Endothelial cell of umbilical vein (primary cell): ENCODE measurements at regions of chr7 and their contacts with region 1.

Region 1: DNA sequence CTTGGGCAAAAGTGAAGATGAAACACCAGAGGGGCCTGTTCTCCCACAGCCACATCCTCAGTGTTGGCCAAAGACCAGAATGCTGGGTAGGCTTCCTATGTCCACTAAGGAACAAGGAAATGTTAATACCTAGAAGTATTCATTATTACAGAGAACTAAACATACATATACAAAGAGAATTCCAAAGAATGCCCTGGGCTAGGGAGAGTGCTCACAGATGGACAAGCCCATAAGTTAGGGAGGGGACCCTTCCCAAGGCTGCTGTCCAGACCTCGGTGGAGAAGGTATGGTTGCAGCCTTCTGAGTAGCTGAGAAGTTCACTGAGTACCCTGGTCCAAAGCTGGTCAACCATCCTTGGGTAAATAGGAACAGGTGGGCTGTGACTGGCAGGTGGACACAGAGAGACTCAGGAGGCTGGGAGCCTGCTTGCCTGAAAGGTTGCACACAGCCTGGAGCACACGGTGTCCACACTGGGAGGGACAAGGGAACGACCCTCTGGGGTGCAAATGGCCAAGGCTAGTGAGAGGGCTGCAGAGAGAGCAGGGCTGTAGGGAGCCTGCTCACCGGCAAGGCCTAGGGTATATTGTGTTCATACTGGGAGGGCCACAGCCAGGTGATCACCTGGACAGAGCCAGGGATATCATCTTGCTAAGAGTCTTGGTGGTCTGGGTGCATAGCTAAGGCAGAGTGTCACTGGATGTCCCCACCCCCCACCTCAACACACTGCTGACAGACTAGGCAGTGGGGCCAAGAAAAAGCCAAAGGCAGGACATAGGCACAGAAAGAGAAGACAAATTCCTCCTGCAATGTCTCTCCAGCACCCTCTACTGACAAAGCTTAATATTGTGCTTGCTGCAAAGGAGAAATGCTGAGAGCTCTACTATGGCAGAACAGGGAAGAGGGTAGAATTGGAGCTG is 40.3 kb downstream of the CPVL start:
- DNase-seq: peak; percentile 66
- H3K4me3 ChIP-seq: no peak overlapping the region
- H3K27ac ChIP-seq: no peak overlapping the region
- H3K4me1 ChIP-seq: no peaks in the 10 kb centered on the region
- H3K27me3 ChIP-seq: peaks cover 8 to 13% of the 10 kb centered on the region in 2 experiments
- CTCF ChIP-seq: peak; percentile 69 to 75
- POLR2A ChIP-seq: no peak

Region 2: DNA sequence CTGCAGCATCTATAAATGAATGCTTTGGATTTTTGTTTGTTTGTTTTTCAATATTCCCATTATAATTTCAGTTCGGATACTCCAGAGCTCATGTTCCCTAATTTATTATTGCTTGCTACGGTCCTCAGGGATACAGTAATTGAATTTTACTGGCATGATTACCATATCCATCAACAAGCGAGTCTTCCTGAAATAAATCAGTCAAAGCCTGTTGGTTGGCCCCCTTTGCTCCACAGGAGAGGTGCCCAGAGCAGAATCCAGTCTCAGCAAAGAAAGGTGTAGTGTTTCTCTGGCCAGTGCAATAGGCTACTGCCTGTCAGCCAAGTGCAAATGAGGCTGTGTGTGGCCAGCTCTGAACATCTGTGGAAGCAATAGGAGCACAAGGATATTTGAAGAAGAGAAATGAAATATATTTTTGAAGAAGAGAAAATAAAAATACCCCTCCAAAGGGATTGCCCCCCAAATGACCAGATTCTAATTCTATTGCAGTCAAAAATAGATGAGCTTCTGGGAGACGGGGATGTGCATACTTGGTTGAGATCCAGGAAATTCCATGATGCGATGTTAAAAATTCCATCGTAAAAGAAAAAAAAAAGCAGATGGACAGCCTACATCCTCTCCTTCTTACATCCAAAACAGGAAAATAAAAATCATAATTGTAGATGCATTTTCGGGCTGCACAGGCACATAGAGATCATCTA is 166.0 kb before region 1 on chr7:
- CTCF ChIA-PET with region 1: interaction called, 18 read pairs
- POLR2A ChIA-PET with region 1: no interaction called
- dilution Hi-C with region 1: no loop called
- intact Hi-C with region 1: no loop called
- DNase-seq: no peak
- H3K4me3 ChIP-seq: no peak overlapping the region
- H3K27ac ChIP-seq: no peak overlapping the region
- H3K4me1 ChIP-seq: no peaks in the 10 kb centered on the region
- H3K27me3 ChIP-seq: no peaks in the 10 kb centered on the region
- CTCF ChIP-seq: no peak
- POLR2A ChIP-seq: no peak

Region 3: GRCh38 chr7:28961972-28962371 is 144.0 kb before region 1 on chr7:
- CTCF ChIA-PET with region 1: interaction called, 161 read pairs
- POLR2A ChIA-PET with region 1: no interaction called
- dilution Hi-C with region 1: no loop called
- intact Hi-C with region 1: no loop called
- DNase-seq: no peak
- H3K4me3 ChIP-seq: no peak overlapping the region
- H3K27ac ChIP-seq: no peak overlapping the region
- H3K4me1 ChIP-seq: peaks cover 5% of the 10 kb centered on the region
- H3K27me3 ChIP-seq: peaks cover 15 to 31% of the 10 kb centered on the region in 2 experiments
- CTCF ChIP-seq: no peak
- POLR2A ChIP-seq: no peak

Region 4: GRCh38 chr7:29091715-29092114 is 14.3 kb before region 1 on chr7:
- CTCF ChIA-PET with region 1: interaction called, 15 read pairs
- POLR2A ChIA-PET with region 1: no interaction called
- dilution Hi-C with region 1: no loop called
- intact Hi-C with region 1: no loop called
- DNase-seq: no peak
- H3K4me3 ChIP-seq: peak overlapping the region in 2 of 3 experiments; percentile 15 to 53
- H3K27ac ChIP-seq: no peak overlapping the region
- H3K4me1 ChIP-seq: peaks cover 6% of the 10 kb centered on the region
- H3K27me3 ChIP-seq: peaks cover 3 to 6% of the 10 kb centered on the region in 2 experiments
- CTCF ChIP-seq: no peak
- POLR2A ChIP-seq: no peak

Region 5: DNA sequence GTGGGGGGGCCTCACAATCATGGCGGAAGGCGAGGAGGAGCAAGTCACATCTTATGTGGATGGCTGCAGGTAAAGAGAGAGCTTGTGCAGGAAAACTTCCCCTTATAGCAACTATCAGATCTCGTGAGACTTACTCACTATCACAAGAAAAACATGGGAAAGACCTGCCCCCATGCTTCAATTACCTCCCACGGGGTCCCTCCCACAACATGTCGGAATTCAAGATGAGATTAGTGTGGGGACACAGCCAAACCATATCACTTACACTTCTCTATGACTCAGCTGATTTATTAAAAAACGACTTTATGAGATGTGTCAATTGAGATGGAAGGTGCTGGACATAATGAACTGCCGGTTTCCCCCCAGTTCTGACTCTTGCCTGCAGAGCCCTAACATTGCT is 64.8 kb after region 1 on chr7:
- CTCF ChIA-PET with region 1: no interaction called
- POLR2A ChIA-PET with region 1: no interaction called
- dilution Hi-C with region 1: no loop called
- intact Hi-C with region 1: no loop called
- DNase-seq: no peak
- H3K4me3 ChIP-seq: no peak overlapping the region
- H3K27ac ChIP-seq: no peak overlapping the region
- H3K4me1 ChIP-seq: no peaks in the 10 kb centered on the region
- H3K27me3 ChIP-seq: peaks cover 4 to 11% of the 10 kb centered on the region in 2 experiments
- CTCF ChIP-seq: no peak
- POLR2A ChIP-seq: no peak

Region 6: GRCh38 chr7:29345600-29345999 is 239.6 kb after region 1 on chr7:
- CTCF ChIA-PET with region 1: interaction called, 22 read pairs
- POLR2A ChIA-PET with region 1: no interaction called
- dilution Hi-C with region 1: no loop called
- intact Hi-C with region 1: loop called (anchors 1 kb)
- DNase-seq: peak; percentile 41
- H3K4me3 ChIP-seq: no peak overlapping the region
- H3K27ac ChIP-seq: no peak overlapping the region
- H3K4me1 ChIP-seq: no peaks in the 10 kb centered on the region
- H3K27me3 ChIP-seq: peaks cover 1 to 5% of the 10 kb centered on the region in 2 experiments
- CTCF ChIP-seq: peak; percentile 45 to 49
- POLR2A ChIP-seq: no peak